Activated CD4-positive, alpha-beta T cell treated with anti-CD3 and anti-CD28 coated beads for 36 hours (primary cell): ENCODE measurements at regions of chr20 and their contacts with region 1.

Region 1: DNA sequence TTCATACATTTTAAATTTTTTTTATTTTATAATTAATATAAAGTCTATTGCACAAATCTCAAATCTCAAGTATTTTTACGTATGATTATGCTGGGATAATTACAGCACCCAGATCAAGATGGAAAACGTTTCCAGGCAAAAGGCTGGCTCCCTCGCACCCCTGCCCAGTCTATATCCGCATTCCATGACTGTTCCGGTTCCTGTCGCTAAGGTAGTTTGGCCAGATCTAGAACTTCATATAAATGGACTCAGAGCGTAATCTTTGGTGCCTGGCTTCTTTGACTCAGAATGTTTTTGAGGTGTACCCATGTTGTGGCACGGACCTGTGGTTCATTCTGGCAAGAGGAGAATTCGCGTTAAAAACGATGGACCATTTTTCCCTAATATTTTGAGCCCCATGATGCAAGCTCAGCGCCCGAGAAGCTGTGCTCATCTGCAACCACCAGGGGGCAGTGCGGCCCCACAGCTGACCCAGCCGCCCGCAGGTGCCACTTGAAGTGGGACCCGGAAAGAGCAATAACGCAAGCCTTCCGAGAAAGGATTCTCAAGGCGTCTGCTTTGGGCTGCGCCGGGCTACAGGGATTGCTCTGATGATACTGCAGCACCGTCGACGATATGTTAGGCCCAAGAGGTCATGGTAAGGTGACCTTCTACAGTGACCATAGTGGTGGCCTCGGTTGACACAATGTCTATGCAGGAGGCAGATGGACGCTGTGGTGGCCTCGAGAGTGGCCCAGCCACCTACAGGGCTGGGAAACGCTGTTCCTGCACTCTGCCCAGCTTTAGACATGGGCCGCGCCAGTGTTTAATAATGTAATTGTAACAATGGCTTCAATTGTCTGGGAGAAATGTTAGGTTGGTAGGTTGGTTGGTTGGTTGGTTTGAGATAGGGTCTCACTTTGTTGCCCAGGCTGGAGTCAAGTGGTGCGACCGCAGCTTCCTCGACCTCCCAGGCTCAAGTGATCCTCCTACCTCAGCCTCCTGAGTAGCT is 160.1 kb downstream of the ZMYND8 start:
- DNase-seq: peak; percentile 91
- ATAC-seq: peak; percentile 57
- H3K4me3 Mint-ChIP-seq: no peak overlapping the region
- H3K27ac Mint-ChIP-seq: no peak overlapping the region
- H3K4me1 Mint-ChIP-seq: peaks cover 16% of the 10 kb centered on the region
- H3K27me3 Mint-ChIP-seq: peaks cover 8% of the 10 kb centered on the region

Region 2: GRCh38 chr20:47213966-47214365 is 17.6 kb after region 1 on chr20:
- CTCF ChIA-PET with region 1: interaction called, 11 read pairs
- POLR2A ChIA-PET with region 1: no interaction called
- intact Hi-C with region 1: no loop called
- DNase-seq: no peak
- ATAC-seq: no peak
- H3K4me3 Mint-ChIP-seq: no peak overlapping the region
- H3K27ac Mint-ChIP-seq: no peak overlapping the region
- H3K4me1 Mint-ChIP-seq: no peaks in the 10 kb centered on the region
- H3K27me3 Mint-ChIP-seq: no peaks in the 10 kb centered on the region

Region 3: GRCh38 chr20:47620808-47621805 is 424.7 kb after region 1 on chr20:
- CTCF ChIA-PET with region 1: interaction called, 3 read pairs
- POLR2A ChIA-PET with region 1: interaction called, 3 read pairs
- intact Hi-C with region 1: loop called (anchors 2 to 5 kb)
- DNase-seq: no peak
- ATAC-seq: peak; percentile 61
- H3K4me3 Mint-ChIP-seq: no peak overlapping the region
- H3K27ac Mint-ChIP-seq: peak overlapping the region; percentile 79
- H3K4me1 Mint-ChIP-seq: peaks cover 33% of the 10 kb centered on the region
- H3K27me3 Mint-ChIP-seq: no peaks in the 10 kb centered on the region